ENCODE measurements at regions of chr2 and their contacts with region 1.

Region 1: DNA sequence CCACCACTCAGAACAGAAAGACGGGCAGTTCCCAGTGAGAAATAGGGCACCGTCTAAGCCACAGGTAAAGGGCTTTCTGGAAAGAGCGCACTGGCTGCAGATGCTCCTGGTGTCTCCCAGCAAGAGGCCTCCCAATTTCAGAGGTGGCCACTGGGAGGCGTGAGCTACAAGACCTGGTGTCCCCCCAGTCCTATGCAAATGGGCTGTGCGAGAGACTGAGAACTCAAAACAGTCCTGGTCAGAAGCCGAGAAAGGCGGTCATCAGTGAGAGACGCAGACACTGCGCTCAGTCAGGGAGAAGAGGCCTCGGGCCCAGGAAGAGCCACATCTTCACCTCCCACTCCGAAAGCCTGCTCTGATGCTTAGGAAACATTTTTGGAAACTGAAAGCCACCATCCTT is 179.5 kb downstream of the EIPR1 start:
- DNase-seq: no peak
- H3K4me3 ChIP-seq: no peak overlapping the region
- H3K27ac ChIP-seq: no peak overlapping the region
- H3K4me1 ChIP-seq: peaks cover 0 to 5% of the 10 kb centered on the region in 2 donors
- H3K27me3 ChIP-seq: no peaks in the 10 kb centered on the region
- CTCF ChIP-seq: no peak
- POLR2A ChIP-seq: no peak

Region 2: GRCh38 chr2:3282056-3282998 is 84.2 kb after region 1 on chr2:
- intact Hi-C with region 1: loop called (anchors 10 kb)
- DNase-seq: peak; percentile 86 to 87
- H3K4me3 ChIP-seq: no peak overlapping the region
- H3K27ac ChIP-seq: peak overlapping the region; percentile 71 to 81 (median 80)
- H3K4me1 ChIP-seq: peaks cover 21 to 62% of the 10 kb centered on the region in 2 donors
- H3K27me3 ChIP-seq: no peaks in the 10 kb centered on the region
- CTCF ChIP-seq: peak in 1 of 6 experiments; percentile 7
- POLR2A ChIP-seq: peak in 1 of 2 donors; percentile 10

Measured in thyroid gland (tissue), 4 donors.